GM23248 (cell line): ENCODE measurements at regions of chr5 and their contacts with region 1.

Region 1: DNA sequence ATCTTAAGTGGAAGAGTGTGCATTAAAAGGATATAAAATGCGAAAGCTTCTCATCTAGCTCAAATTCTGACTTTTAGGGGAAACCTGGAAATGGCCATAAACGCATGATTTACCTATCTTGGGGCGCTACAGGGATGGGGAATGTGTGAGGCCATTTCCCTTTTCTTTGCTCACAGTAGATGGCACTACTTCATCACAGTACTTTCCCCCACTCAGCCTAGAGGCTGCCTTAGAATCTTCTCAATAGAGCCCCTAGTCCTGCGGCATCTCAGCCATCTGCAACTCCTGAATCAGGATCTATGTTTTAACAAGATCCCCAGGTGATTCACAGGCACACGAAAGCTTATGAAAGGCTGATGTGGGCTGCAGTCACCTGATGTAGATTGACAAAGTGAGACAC is 110.8 kb downstream of the LHFPL2 start:
- DNase-seq: peak; percentile 64
- H3K4me3 ChIP-seq: no peak overlapping the region
- H3K27ac ChIP-seq: no peak overlapping the region
- H3K4me1 ChIP-seq: peaks cover 18% of the 10 kb centered on the region
- H3K27me3 ChIP-seq: no peaks in the 10 kb centered on the region

Region 2: GRCh38 chr5:78109891-78110324 is 427.9 kb before region 1 on chr5:
- in situ Hi-C with region 1: no loop called
- DNase-seq: no peak
- H3K4me3 ChIP-seq: no peak overlapping the region
- H3K27ac ChIP-seq: no peak overlapping the region
- H3K4me1 ChIP-seq: no peaks in the 10 kb centered on the region
- H3K27me3 ChIP-seq: no peaks in the 10 kb centered on the region

Region 3: DNA sequence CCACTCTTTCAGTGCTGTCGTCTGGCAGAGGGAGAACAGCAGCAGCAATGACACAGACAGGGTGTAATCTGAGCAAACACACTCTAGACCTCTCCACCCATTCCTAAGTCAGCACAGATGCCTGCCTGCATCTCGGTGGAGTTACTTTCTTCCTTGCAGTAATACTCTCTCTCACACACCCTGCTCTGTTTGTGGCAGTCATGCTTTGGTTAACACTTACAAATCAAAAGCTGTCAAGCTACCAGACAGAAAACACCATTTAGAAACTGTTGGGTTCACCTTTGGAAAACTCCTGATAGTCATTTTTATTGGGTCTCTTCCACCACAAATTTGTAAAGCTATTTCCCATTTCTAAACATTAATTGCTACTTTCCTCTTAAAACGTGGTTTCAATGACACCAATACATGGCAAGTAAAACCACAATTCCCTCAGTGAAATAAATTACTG is 83.5 kb after region 1 on chr5:
- in situ Hi-C with region 1: no loop called
- DNase-seq: peak; percentile 48
- H3K4me3 ChIP-seq: no peak overlapping the region
- H3K27ac ChIP-seq: no peak overlapping the region
- H3K4me1 ChIP-seq: peaks cover 8% of the 10 kb centered on the region
- H3K27me3 ChIP-seq: no peaks in the 10 kb centered on the region

Region 4: GRCh38 chr5:78803353-78803752 is 265.5 kb after region 1 on chr5:
- in situ Hi-C with region 1: loop called (anchors 10 kb)
- DNase-seq: peak; percentile 39
- H3K4me3 ChIP-seq: no peak overlapping the region
- H3K27ac ChIP-seq: no peak overlapping the region
- H3K4me1 ChIP-seq: peaks cover 42% of the 10 kb centered on the region
- H3K27me3 ChIP-seq: no peaks in the 10 kb centered on the region

Region 5: DNA sequence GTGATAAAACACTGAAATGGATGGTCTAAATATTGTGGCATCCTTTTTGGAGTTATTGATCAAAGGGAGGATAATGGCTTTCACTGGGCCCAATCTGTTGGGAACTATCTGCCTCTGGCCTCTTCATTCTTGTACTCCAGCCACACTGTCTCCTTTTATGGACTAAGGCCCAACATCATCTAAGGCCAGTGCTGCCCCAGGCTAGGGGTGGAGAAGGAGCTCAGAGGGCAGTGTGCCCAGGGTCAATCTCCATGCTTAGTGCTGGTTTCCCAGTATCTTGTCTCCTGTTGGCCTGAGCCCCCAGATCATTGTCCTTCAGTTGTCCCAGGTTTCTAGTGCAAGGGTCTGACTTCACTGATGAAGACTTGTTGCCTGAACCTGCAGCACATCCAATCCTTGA is 671.7 kb after region 1 on chr5:
- in situ Hi-C with region 1: no loop called
- DNase-seq: no peak
- H3K4me3 ChIP-seq: no peak overlapping the region
- H3K27ac ChIP-seq: no peak overlapping the region
- H3K4me1 ChIP-seq: no peaks in the 10 kb centered on the region
- H3K27me3 ChIP-seq: no peaks in the 10 kb centered on the region